ENCODE measurements at regions of chr13 and their contacts with region 1.

Region 1: DNA sequence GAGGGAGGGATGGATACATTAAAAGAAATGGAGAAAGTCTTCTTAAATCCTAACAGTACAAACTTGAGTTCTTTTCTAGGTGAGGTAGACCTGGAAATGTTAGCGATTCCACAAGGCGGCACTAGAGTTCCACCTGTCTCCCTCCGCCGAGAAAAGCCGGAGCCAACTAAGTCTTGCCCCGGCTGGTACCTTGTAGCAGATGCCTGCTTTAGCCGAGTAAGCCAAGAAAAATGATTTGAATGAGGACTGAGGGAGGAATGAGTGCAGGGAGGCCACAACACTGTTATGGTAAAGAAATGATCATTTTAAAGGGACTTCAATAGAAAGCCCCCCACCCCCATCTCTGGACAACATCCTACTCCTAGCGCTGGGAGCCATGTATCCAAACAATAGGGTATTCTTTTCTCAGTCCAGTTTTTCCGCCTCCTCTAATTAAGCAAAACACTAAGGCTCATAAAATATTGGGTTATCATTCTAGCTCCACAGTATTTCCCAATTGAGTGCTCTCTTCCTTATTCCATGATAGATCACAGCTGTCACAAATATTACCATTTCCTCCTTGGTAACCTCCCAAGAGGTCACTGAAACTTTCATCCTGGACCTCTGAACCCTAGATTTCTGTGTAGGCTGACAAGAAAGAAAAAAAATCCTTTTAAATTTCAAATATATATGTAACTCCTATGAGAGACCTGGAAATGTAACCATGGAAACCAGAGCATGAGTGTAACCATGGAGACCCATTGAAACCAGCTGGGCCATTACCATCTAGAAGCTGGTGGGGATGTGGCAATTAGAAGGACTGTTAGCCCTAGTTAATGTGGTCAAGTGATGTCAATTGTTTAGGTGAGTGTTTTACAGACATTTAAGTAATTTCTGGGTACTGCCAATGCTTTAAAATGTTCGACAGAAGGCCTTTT is 58.3 kb downstream of the GPALPP1 start:
- DNase-seq: peak; percentile 68
- ATAC-seq: peak; percentile 95
- H3K4me3 ChIP-seq: no peak overlapping the region
- H3K27ac ChIP-seq: no peak overlapping the region
- H3K4me1 ChIP-seq: peaks cover 0 to 4% of the 10 kb centered on the region in 2 experiments; a peak in 1 of 4 replicates
- H3K27me3 ChIP-seq: no peaks in the 10 kb centered on the region
- CTCF ChIP-seq: peak; percentile 87 to 95 (median 94)
- POLR2A ChIP-seq: no peak
- RAD21 ChIP-seq: peak; percentile 98

Region 2: DNA sequence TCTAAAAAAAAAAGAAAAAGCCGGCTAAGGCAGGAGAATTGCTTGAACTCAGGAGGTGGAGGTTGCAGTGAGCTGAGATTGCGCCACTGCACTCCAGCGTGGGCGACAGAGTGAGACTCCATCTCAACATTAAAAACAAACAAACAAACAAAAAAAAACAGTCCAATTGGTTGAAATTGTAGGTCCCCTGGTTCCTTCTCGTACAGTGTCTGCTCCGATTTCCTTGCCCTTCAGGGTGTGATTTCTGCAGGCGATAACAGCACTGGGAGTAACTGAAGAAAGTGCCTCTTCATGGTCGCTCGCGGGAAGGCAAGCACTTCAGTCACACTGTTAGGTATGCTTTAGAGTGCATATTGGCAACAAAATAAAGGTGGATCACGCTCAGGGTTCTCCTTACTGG is 253.6 kb after region 1 on chr13:
- CTCF ChIA-PET with region 1: interaction called, 11 read pairs
- POLR2A ChIA-PET with region 1: no interaction called
- RAD21 ChIA-PET with region 1: no interaction called
- intact Hi-C with region 1: no loop called
- DNase-seq: no peak
- ATAC-seq: no peak
- H3K4me3 ChIP-seq: no peak overlapping the region
- H3K27ac ChIP-seq: no peak overlapping the region
- H3K4me1 ChIP-seq: peaks cover 0 to 7% of the 10 kb centered on the region in 2 experiments; a peak in 1 of 4 replicates
- H3K27me3 ChIP-seq: no peaks in the 10 kb centered on the region
- CTCF ChIP-seq: no peak
- POLR2A ChIP-seq: no peak
- RAD21 ChIP-seq: no peak

Region 3: DNA sequence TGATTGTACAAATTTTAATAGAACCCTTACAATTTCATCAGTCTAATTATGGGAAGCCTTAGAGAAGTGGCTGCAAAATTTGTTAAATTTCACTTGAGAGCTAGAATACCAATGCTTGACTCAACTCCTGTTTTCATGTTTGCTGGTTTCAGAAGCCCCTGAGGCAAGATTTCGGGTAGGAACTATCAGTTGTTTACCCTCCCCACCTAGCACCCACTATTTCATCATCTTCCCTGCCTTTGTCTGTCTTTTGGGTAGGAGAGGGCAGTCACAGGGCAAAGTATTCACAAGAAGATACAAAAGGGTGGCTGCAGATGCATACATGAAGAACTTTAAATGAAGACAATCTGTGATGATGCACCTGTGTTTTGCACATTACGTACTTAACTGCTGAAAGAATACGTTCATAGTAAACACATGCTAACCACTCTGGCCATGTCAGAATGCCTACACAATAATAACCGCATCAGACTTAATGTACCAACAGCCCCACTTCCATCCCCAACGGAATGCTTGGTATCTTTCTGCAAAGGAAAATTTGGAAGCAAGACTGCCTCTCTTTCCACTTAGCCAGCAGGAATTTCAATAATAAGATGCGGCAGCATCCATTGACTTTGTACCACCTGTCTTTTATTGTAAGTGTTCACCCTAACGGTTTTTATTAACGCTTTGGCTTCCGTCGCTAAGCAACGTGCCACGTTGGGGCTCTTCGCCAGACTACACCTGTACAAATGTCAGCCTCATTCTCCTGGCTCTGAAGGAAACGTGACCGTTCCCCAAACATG is 262.9 kb after region 1 on chr13:
- CTCF ChIA-PET with region 1: interaction called, 41 read pairs
- POLR2A ChIA-PET with region 1: no interaction called
- RAD21 ChIA-PET with region 1: interaction called, 4 read pairs
- intact Hi-C with region 1: loop called (anchors 1 kb)
- DNase-seq: no peak
- ATAC-seq: peak; percentile 35; the same call in 1 of the 2 replicates
- H3K4me3 ChIP-seq: no peak overlapping the region
- H3K27ac ChIP-seq: no peak overlapping the region
- H3K4me1 ChIP-seq: peaks cover 2 to 16% of the 10 kb centered on the region in 2 experiments; a peak in 3 of 4 replicates
- H3K27me3 ChIP-seq: no peaks in the 10 kb centered on the region
- CTCF ChIP-seq: no peak
- POLR2A ChIP-seq: no peak
- RAD21 ChIP-seq: no peak

Region 4: GRCh38 chr13:45393941-45394570 is 346.4 kb after region 1 on chr13:
- CTCF ChIA-PET with region 1: interaction called, 3 read pairs
- POLR2A ChIA-PET with region 1: no interaction called
- RAD21 ChIA-PET with region 1: no interaction called
- intact Hi-C with region 1: loop called (anchors 10 kb)
- DNase-seq: peak; percentile 45
- ATAC-seq: peak; percentile 99
- H3K4me3 ChIP-seq: no peak overlapping the region
- H3K27ac ChIP-seq: no peak overlapping the region
- H3K4me1 ChIP-seq: no peaks in the 10 kb centered on the region
- H3K27me3 ChIP-seq: no peaks in the 10 kb centered on the region
- CTCF ChIP-seq: peak; percentile 43 to 80 (median 65); a peak in 4 of 6 replicates
- POLR2A ChIP-seq: no peak
- RAD21 ChIP-seq: peak; percentile 63

Region 5: DNA sequence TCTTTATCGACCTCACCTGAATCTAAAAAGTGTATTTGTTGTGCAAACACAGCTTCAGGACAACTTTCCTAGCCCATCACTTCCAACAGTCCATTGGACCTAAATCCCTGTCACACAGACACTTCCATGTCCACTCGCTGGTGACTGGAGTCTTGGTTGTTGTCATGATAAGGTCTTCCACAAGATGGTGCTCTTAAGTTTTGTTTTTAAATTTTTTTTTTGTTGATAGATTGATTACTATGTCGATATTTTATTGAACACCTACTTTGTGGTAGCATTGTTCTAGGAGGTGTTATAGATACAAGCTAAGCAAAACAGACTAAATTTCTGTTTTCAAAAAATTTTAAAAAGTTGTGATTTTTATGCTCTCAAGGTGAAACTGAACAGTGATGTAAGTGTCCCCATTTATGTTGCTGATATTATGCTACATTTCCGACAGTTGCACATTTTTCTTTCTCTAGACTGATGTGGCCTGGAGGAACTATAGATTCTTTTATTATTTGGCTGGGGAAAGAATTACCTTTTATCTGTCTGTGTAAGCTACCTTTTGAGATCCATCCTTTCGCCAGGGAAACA is 576.0 kb after region 1 on chr13:
- CTCF ChIA-PET with region 1: no interaction called
- POLR2A ChIA-PET with region 1: no interaction called
- RAD21 ChIA-PET with region 1: no interaction called
- intact Hi-C with region 1: no loop called
- DNase-seq: peak; percentile 33
- ATAC-seq: peak; percentile 76; the same call in 1 of the 2 replicates
- H3K4me3 ChIP-seq: no peak overlapping the region
- H3K27ac ChIP-seq: no peak overlapping the region
- H3K4me1 ChIP-seq: no peaks in the 10 kb centered on the region
- H3K27me3 ChIP-seq: peaks cover 90% of the 10 kb centered on the region
- CTCF ChIP-seq: peak; percentile 36 to 62 (median 44); a peak in 4 of 6 replicates
- POLR2A ChIP-seq: no peak
- RAD21 ChIP-seq: peak; percentile 58

Region 6: GRCh38 chr13:45781553-45782326 is 734.1 kb after region 1 on chr13:
- CTCF ChIA-PET with region 1: no interaction called
- POLR2A ChIA-PET with region 1: no interaction called
- RAD21 ChIA-PET with region 1: no interaction called
- intact Hi-C with region 1: no loop called
- DNase-seq: no peak
- ATAC-seq: no peak
- H3K4me3 ChIP-seq: no peak overlapping the region
- H3K27ac ChIP-seq: no peak overlapping the region
- H3K4me1 ChIP-seq: no peaks in the 10 kb centered on the region; a peak in 1 of 4 replicates
- H3K27me3 ChIP-seq: no peaks in the 10 kb centered on the region; the same call in 1 of the 2 replicates
- CTCF ChIP-seq: no peak
- POLR2A ChIP-seq: no peak
- RAD21 ChIP-seq: no peak

Measured in HCT116 (cell line).